Dendritic cell treated with granulocyte-macrophage colony-stimulating factor and Interleukin-4, amounts not matched to agents 40 ng/mL and 50 ng/mL, for 4 days (primary cell): ENCODE measurements at regions of chr3 and their contacts with region 1.

Region 1: GRCh38 chr3:46488735-46489361 is 8.9 kb upstream of the RTP3 start:
- H3K4me3 Mint-ChIP-seq: peak overlapping the region; percentile 53
- H3K27ac Mint-ChIP-seq: no peak overlapping the region
- H3K4me1 Mint-ChIP-seq: peaks cover 8% of the 10 kb centered on the region
- H3K27me3 Mint-ChIP-seq: peaks cover 8% of the 10 kb centered on the region

Region 2: DNA sequence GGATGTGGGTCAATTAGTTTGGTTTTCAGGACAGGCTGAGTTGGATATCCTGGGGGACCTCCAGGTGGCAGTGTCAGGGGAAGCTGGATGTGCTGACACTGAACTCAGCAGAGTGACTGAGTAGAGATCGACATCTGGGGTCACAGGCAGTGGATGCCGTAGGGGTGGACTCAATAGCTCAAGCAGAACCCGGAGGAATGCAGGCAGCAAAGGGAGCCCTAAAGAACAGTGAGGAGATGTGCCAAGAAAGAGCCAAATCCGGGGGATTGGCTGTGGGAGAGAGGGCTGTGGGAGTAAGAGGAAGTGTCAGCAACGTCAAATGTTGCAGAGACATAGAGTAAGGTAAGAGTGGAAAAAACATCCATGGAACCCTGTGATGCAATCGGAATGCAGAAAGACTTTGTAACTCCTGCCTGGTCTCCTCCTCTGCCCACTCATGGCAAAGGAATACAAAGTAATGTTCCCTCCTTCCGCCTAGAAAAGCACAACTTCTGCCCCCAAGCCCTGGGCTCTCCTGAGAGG is 93.6 kb before region 1 on chr3:
- intact Hi-C with region 1: no loop called
- H3K4me3 Mint-ChIP-seq: no peak overlapping the region
- H3K27ac Mint-ChIP-seq: peak overlapping the region; percentile 10
- H3K4me1 Mint-ChIP-seq: peaks cover 49% of the 10 kb centered on the region
- H3K27me3 Mint-ChIP-seq: peaks cover 3% of the 10 kb centered on the region

Region 3: DNA sequence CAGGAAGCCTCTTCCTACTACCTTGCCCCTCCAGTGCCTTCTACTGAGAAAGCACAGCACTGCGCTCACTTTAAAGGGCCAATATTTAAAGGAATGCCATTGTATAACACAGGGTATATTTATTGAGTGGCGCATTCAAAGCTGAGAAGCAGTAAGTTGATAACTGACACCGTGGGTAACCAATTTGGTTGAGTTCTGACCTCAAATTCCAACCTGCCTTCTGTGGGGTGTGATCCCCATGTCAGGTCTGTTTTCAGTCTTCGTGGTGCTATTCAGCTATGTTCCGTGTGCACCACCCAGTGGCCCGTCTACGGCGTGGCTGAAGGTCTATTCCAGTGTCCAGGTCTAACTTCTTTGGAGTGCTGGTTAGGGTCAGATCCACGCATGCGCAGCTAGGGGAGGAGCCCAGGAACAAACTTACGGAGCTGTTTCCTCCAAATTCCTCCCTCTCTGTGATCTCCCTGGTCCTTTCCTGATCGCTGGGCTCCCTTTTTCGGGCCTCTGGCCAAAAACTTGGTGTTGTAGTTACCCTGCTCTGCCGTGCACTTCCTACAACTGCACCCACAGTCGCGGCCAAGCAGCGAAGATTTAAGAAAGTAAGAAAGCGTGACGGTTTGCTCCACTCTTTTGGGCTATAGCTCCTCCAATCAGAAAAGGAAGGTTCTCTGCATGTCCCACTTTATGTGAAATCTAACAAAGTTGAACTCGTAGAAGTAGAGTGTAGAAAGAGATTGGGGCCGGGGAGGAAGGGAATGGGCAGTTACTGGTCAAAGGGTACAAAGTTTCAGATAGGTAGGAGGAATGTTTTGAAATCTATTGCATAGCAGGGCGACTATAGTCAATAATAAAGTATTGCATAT is 69.6 kb after region 1 on chr3:
- intact Hi-C with region 1: loop called (anchors 2 kb)
- H3K4me3 Mint-ChIP-seq: peak overlapping the region; percentile 83
- H3K27ac Mint-ChIP-seq: peak overlapping the region; percentile 52
- H3K4me1 Mint-ChIP-seq: peaks cover 10% of the 10 kb centered on the region
- H3K27me3 Mint-ChIP-seq: peaks cover 11% of the 10 kb centered on the region

Region 4: DNA sequence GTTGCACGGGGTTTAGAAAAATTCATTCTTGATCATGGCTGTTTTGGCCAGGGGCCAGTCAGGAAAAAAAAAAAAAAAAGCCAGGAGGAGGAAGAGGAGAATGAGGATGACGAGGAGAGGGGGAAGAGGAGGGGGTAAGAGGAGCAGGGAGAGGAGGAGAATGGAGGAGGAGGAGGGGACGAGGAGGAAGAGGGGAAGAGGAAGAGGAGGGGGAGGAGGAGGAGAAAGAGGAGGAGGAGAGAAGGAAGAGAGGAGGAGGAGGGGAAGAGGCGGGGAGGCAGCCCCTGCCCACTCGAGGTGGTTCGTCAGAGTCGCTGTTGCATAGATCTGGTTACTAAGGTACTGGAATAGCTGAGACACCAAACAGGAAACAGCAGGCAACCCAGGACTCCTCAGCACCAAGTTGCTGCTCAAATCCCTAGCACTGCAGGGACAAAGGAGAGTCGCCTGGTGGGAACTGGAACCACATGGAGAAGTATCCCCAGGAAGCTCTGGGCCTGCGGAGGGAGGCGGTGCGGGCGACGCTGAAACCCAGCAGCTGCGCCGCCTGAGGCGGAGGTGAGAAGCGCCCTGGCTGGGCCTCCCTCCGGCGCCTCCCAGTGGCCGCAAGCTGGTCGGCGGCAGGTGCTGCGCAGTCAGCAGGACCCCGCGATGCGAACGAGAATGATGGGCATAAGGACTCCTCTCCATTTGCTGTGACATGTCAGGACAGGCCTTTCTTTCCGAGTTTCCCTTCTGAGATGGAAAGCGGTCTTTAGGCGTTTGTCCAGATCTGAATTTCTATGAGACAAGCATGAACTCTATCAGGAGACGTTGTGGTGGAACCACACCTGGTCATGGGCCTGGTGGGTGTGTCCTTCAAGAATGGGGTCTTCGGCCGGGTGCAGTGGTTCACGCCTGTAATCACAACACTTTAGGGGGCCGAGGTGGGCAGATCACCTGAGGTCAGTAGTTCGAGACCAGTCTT is 141.0 kb after region 1 on chr3:
- intact Hi-C with region 1: loop called (anchors 2 kb)
- H3K4me3 Mint-ChIP-seq: peak overlapping the region; percentile 14
- H3K27ac Mint-ChIP-seq: no peak overlapping the region
- H3K4me1 Mint-ChIP-seq: peaks cover 27% of the 10 kb centered on the region
- H3K27me3 Mint-ChIP-seq: peaks cover 11% of the 10 kb centered on the region